ENCODE measurements at regions of chr2 and their contacts with region 1.

Region 1: GRCh38 chr2:104849618-104850141 is 4.2 kb upstream of the POU3F3 start:
- DNase-seq: peak; percentile 73
- H3K4me3 Mint-ChIP-seq: no peak overlapping the region
- H3K27ac Mint-ChIP-seq: no peak overlapping the region
- H3K4me1 Mint-ChIP-seq: peaks cover 26% of the 10 kb centered on the region
- H3K27me3 Mint-ChIP-seq: peaks cover 92% of the 10 kb centered on the region
- CTCF ChIP-seq: peak; percentile 86

Region 2: GRCh38 chr2:103959174-103960128 is 890.2 kb before region 1 on chr2:
- CTCF ChIA-PET with region 1: interaction called, 47 read pairs
- POLR2A ChIA-PET with region 1: interaction called, 3 read pairs
- intact Hi-C with region 1: loop called (anchors 1 kb)
- DNase-seq: peak; percentile 50
- H3K4me3 Mint-ChIP-seq: no peak overlapping the region
- H3K27ac Mint-ChIP-seq: no peak overlapping the region
- H3K4me1 Mint-ChIP-seq: no peaks in the 10 kb centered on the region
- H3K27me3 Mint-ChIP-seq: peaks cover 79% of the 10 kb centered on the region
- CTCF ChIP-seq: peak; percentile 65

Region 3: DNA sequence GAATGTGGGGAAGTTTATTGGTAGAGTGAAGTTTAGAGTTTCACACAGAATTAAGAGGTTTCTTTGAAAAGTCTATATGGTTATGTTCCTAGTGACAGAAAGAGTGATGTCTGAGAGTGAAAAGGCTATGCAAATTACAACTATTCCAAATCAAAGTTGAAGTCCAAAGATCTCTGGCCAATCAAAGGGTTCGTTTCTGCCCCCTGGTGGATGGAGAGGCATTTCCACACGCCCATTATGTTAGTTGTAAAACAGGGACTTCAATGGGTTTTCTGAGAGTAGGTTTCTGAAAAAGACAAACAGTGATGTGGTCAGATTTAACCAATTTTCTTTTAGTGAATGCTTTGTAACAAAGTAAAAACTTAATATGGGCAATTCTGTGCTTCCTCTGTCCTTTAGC is 437.3 kb before region 1 on chr2:
- CTCF ChIA-PET with region 1: interaction called, 10 read pairs
- POLR2A ChIA-PET with region 1: no interaction called
- intact Hi-C with region 1: no loop called
- DNase-seq: peak; percentile 62
- H3K4me3 Mint-ChIP-seq: no peak overlapping the region
- H3K27ac Mint-ChIP-seq: no peak overlapping the region
- H3K4me1 Mint-ChIP-seq: no peaks in the 10 kb centered on the region
- H3K27me3 Mint-ChIP-seq: peaks cover 87% of the 10 kb centered on the region
- CTCF ChIP-seq: peak; percentile 47

Region 4: GRCh38 chr2:104447831-104448434 is 401.7 kb before region 1 on chr2:
- CTCF ChIA-PET with region 1: interaction called, 11 read pairs
- POLR2A ChIA-PET with region 1: interaction called, 3 read pairs
- intact Hi-C with region 1: no loop called
- DNase-seq: peak; percentile 20
- H3K4me3 Mint-ChIP-seq: no peak overlapping the region
- H3K27ac Mint-ChIP-seq: no peak overlapping the region
- H3K4me1 Mint-ChIP-seq: peaks cover 8% of the 10 kb centered on the region
- H3K27me3 Mint-ChIP-seq: peaks cover 9% of the 10 kb centered on the region
- CTCF ChIP-seq: peak; percentile 10

Region 5: DNA sequence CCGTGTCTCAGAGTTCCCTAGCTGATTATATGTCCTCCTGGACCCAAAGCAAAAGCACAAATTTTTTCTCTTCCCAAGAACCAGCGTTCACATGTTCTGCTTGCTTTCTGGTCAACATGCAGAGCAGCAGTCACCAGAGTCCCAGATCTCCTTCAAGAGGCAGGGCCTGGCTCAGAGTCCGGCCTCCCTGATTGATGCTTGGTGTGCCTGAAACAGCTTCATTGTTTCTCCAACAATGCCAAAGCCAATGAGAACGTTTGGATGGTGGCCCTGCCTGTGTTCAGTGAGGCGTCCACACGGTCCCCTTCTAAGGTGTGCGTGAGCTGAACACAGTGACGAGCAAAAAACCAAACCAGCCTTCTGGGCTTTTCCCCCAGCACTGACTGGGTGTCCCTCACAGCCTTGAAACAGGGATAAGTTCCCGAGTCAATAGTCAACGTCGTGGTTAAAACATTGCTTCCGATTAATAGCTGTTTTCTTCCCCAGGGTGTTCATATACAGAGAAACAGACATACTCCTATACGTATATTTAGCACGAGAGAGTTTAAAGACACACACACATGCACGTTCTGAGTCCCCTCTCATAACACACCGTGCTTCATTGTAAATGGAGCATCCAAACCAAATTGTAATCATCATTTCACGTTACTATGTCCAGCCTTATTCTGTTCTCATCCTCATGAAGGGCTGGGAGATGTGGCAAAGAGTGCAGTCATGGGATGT is 15.1 kb before region 1 on chr2:
- CTCF ChIA-PET with region 1: interaction called, 12 read pairs
- POLR2A ChIA-PET with region 1: no interaction called
- intact Hi-C with region 1: no loop called
- DNase-seq: no peak
- H3K4me3 Mint-ChIP-seq: no peak overlapping the region
- H3K27ac Mint-ChIP-seq: no peak overlapping the region
- H3K4me1 Mint-ChIP-seq: peaks cover 4% of the 10 kb centered on the region
- H3K27me3 Mint-ChIP-seq: no peaks in the 10 kb centered on the region
- CTCF ChIP-seq: no peak

Region 6: GRCh38 chr2:104872866-104873688 is 23.4 kb after region 1 on chr2:
- CTCF ChIA-PET with region 1: interaction called, 12 read pairs
- POLR2A ChIA-PET with region 1: interaction called, 3 read pairs
- intact Hi-C with region 1: no loop called
- DNase-seq: peak; percentile 84
- H3K4me3 Mint-ChIP-seq: peak overlapping the region; percentile 65
- H3K27ac Mint-ChIP-seq: no peak overlapping the region
- H3K4me1 Mint-ChIP-seq: no peaks in the 10 kb centered on the region
- H3K27me3 Mint-ChIP-seq: no peaks in the 10 kb centered on the region
- CTCF ChIP-seq: peak; percentile 65

Region 7: GRCh38 chr2:105081006-105081601 is 231.4 kb after region 1 on chr2:
- CTCF ChIA-PET with region 1: no interaction called
- POLR2A ChIA-PET with region 1: no interaction called
- intact Hi-C with region 1: no loop called
- DNase-seq: no peak
- H3K4me3 Mint-ChIP-seq: no peak overlapping the region
- H3K27ac Mint-ChIP-seq: no peak overlapping the region
- H3K4me1 Mint-ChIP-seq: no peaks in the 10 kb centered on the region
- H3K27me3 Mint-ChIP-seq: no peaks in the 10 kb centered on the region
- CTCF ChIP-seq: no peak

Measured in MCF 10A (cell line).